ENCODE measurements at regions of chr3 and their contacts with region 1.

Region 1: DNA sequence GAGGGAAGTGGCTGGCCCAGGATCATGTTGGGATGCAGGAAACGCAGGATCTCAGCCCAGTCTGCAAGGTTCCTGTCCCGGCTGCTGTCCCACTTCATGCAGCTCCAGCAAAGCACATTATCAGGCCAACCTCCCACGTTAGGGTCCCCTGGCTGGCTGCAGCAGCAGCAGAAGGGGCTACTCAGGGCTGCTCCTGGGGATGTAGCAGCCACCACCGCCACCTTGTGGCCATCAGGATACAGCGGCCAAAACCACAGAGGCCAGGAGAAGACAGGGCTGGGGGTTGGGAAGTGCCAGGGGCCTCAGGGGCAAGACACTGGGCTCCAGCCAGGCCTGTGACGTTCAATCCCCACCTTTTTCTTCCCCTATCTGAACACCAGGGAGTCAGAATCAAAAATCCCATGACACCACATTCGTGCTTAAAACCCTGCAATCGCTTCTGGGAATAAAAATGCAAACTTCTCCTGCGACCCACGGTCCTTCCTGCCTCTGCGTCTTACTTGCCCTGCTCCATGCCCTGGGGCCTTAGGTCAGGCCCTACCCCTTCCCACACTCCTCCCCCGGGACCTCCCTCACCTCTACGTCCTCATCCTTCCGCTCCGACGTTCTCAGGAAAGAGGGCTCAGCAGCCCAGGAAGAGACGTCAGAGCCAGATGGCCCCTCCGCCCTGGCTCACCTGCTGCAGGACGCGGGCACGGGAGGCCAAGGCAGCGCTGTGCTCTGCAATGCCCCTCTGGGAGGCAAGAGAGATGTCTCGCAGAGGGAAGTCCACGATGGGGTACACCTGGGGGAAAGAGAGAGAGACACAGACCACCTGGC is 21.5 kb downstream of the SSUH2 start:
- DNase-seq: peak; percentile 66
- H3K4me3 Mint-ChIP-seq: peak overlapping the region; percentile 47
- H3K27ac Mint-ChIP-seq: no peak overlapping the region
- H3K4me1 Mint-ChIP-seq: peaks cover 5% of the 10 kb centered on the region
- H3K27me3 Mint-ChIP-seq: peaks cover 8% of the 10 kb centered on the region

Region 2: GRCh38 chr3:8324740-8325139 is 298.3 kb before region 1 on chr3:
- CTCF ChIA-PET with region 1: no interaction called
- intact Hi-C with region 1: loop called (anchors 1 kb)
- DNase-seq: peak; percentile 48
- H3K4me3 Mint-ChIP-seq: no peak overlapping the region
- H3K27ac Mint-ChIP-seq: no peak overlapping the region
- H3K4me1 Mint-ChIP-seq: peaks cover 17% of the 10 kb centered on the region
- H3K27me3 Mint-ChIP-seq: no peaks in the 10 kb centered on the region

Region 3: GRCh38 chr3:8441969-8442559 is 181.0 kb before region 1 on chr3:
- CTCF ChIA-PET with region 1: interaction called, 5 read pairs
- intact Hi-C with region 1: loop called (anchors 1 kb)
- DNase-seq: no peak
- H3K4me3 Mint-ChIP-seq: no peak overlapping the region
- H3K27ac Mint-ChIP-seq: no peak overlapping the region
- H3K4me1 Mint-ChIP-seq: no peaks in the 10 kb centered on the region
- H3K27me3 Mint-ChIP-seq: peaks cover 2% of the 10 kb centered on the region

Region 4: DNA sequence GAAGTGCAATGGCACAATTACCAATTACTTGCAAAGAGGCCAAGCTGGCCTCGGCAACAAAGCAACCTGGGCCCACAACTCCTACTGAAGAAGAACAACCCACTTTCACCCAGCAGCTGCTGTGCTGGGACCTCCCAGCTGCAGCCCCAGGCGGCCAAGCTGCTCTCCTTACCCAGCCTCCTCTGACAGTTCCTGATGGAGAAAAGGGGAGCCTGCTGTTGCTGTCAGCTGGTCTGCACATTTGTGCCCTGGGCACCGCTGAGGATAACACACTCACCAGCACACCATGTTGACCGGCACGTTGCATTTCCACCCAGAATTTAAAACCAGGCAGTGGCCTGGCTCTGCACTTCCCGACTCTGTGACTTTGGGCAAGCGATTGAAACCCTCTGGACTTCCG is 12.1 kb before region 1 on chr3:
- CTCF ChIA-PET with region 1: no interaction called
- intact Hi-C with region 1: no loop called
- DNase-seq: no peak
- H3K4me3 Mint-ChIP-seq: no peak overlapping the region
- H3K27ac Mint-ChIP-seq: no peak overlapping the region
- H3K4me1 Mint-ChIP-seq: no peaks in the 10 kb centered on the region
- H3K27me3 Mint-ChIP-seq: no peaks in the 10 kb centered on the region